Heart left ventricle (tissue), 16 donors: ENCODE measurements at regions of chr10 and their contacts with region 1.

Region 1: DNA sequence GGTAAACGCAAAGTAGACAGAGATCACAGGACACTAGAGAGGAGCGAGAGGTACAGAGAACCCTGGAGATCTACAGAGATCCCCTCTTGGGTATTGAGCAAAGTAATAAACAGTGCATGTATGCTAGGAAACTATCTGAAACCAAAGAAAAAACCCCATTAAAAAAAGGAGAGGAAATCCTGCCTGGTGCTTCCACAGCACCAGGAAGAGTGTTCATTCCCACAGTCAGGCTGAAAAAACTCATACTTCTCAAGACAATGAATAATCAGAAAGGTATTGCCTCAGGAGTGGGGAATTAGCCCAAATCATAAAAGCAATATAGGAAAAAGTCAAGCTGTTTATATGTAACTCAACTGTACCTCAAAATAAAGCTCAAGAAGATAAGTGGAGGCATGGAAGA is 59.1 kb downstream of the ANKRD26 start:
- DNase-seq: no peak
- ATAC-seq: no peak
- H3K4me3 ChIP-seq: no peak overlapping the region
- H3K27ac ChIP-seq: no peak overlapping the region
- H3K4me1 ChIP-seq: no peaks in the 10 kb centered on the region
- H3K27me3 ChIP-seq: no peaks in the 10 kb centered on the region
- CTCF ChIP-seq: no peak
- POLR2A ChIP-seq: no peak

Region 2: GRCh38 chr10:27099916-27100812 is 59.0 kb after region 1 on chr10 and contains the start of gene ANKRD26:
- intact Hi-C with region 1: no loop called
- DNase-seq: peak; percentile 97 to 100 (median 99)
- ATAC-seq: peak; percentile 94 to 97 (median 94)
- H3K4me3 ChIP-seq: peak within 1 kb of the TSS; percentile 70 to 92 (median 78)
- H3K27ac ChIP-seq: peak within 1 kb of the TSS; percentile 88 to 97 (median 93)
- H3K4me1 ChIP-seq: peaks cover 0 to 23% (median 11%) of the 10 kb centered on the region in 12 donors
- H3K27me3 ChIP-seq: no peaks in the 10 kb centered on the region
- CTCF ChIP-seq: peak in 2 of 12 donors; percentile 13 to 14
- POLR2A ChIP-seq: peak; percentile 47 to 87
- total RNA-seq, gene ANKRD26: 7.0 to 10.9 (median 9.4) TPM

Region 3: GRCh38 chr10:27111277-27111676 is 70.1 kb after region 1 on chr10:
- intact Hi-C with region 1: loop called in 1 of 10 experiments (anchors 10 kb)
- DNase-seq: no peak
- ATAC-seq: no peak
- H3K4me3 ChIP-seq: no peak overlapping the region
- H3K27ac ChIP-seq: no peak overlapping the region
- H3K4me1 ChIP-seq: no peaks in the 10 kb centered on the region
- H3K27me3 ChIP-seq: no peaks in the 10 kb centered on the region
- CTCF ChIP-seq: no peak
- POLR2A ChIP-seq: no peak

Region 4: DNA sequence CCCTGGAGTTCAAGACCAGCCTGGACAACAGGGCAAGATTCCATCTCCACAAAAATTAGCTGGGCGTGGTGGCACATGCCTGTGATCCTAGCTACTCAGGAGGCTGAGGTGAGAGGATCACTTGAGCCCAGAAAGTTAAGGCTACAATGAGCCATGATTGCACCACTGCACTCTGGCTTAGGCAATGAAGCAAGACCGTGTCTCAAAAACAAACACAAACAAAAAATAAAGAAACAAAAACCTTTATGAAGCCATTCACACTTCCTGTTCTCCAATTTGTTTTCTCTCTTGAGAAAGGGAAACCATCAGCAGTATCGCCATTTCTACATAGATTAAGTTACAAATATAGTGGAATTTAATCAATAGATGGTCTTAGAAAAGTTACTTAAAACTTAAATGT is 93.2 kb after region 1 on chr10:
- intact Hi-C with region 1: loop called in 1 of 10 experiments (anchors 10 kb)
- DNase-seq: no peak
- ATAC-seq: no peak
- H3K4me3 ChIP-seq: no peak overlapping the region
- H3K27ac ChIP-seq: no peak overlapping the region
- H3K4me1 ChIP-seq: no peaks in the 10 kb centered on the region
- H3K27me3 ChIP-seq: no peaks in the 10 kb centered on the region
- CTCF ChIP-seq: no peak
- POLR2A ChIP-seq: no peak

Region 5: GRCh38 chr10:27147701-27148100 is 106.5 kb after region 1 on chr10:
- intact Hi-C with region 1: no loop called
- DNase-seq: peak in 4 of 5 donors; percentile 20 to 44 (median 32)
- ATAC-seq: peak; percentile 82 to 90 (median 86)
- H3K4me3 ChIP-seq: no peak overlapping the region
- H3K27ac ChIP-seq: no peak overlapping the region
- H3K4me1 ChIP-seq: peaks cover 0 to 25% (median 12%) of the 10 kb centered on the region in 12 donors
- H3K27me3 ChIP-seq: no peaks in the 10 kb centered on the region
- CTCF ChIP-seq: no peak
- POLR2A ChIP-seq: no peak

Region 6: GRCh38 chr10:27328946-27329345 is 287.8 kb after region 1 on chr10:
- intact Hi-C with region 1: no loop called
- DNase-seq: no peak
- ATAC-seq: no peak
- H3K4me3 ChIP-seq: no peak overlapping the region
- H3K27ac ChIP-seq: no peak overlapping the region
- H3K4me1 ChIP-seq: no peaks in the 10 kb centered on the region
- H3K27me3 ChIP-seq: no peaks in the 10 kb centered on the region
- CTCF ChIP-seq: no peak
- POLR2A ChIP-seq: no peak